Psoas muscle (tissue), 8 donors: ENCODE measurements at regions of chr7 and their contacts with region 1.

Region 1: DNA sequence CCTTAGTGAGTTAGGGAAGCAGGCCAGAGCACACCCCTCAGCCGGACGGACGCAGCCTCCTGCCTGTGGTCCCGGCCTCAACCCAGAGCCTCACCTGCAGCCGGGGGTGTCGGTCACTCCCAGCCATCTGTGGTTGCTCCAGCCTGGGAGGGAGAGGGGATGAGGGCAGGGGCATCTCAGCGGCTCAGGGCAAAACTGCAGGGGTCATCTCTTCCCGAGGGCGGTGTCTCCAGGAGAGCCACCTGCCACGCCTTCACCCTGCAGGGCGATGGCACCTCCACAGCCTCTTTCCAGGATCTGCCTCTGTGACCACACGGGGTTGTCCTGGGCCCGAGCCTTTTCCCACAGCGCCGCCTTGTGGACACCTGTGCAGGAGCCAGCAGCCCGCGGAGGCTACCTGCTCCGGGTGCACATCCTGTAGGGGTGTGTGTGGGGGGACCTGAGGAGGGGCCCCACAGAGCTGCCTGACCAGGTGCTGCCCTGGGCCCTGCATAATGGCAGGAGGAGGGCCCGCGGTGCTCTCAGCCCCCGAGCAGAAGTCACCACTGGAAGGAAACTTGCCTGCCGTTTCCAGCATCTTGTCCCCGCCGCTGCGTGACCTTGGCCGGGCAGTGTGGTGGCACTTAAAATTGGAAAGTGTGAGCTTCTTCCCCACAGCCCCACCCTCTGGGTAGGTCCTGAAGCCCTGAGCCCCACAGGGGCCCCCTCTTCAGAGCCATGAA is 21.6 kb upstream of the AP5Z1 start:
- DNase-seq: peak; percentile 74 to 91
- ATAC-seq: peak; percentile 84 to 94 (median 90)
- H3K4me3 ChIP-seq: no peak overlapping the region
- H3K27ac ChIP-seq: no peak overlapping the region
- H3K4me1 ChIP-seq: no peaks in the 10 kb centered on the region
- H3K27me3 ChIP-seq: no peaks in the 10 kb centered on the region
- CTCF ChIP-seq: peak; percentile 89

Region 2: GRCh38 chr7:4610768-4611467 is 143.0 kb before region 1 on chr7:
- intact Hi-C with region 1: loop called in 1 of 2 experiments (anchors 10 kb)
- DNase-seq: no peak
- ATAC-seq: peak; percentile 29 to 67 (median 52)
- H3K4me3 ChIP-seq: no peak overlapping the region
- H3K27ac ChIP-seq: no peak overlapping the region
- H3K4me1 ChIP-seq: peaks cover 15% of the 10 kb centered on the region
- H3K27me3 ChIP-seq: no peaks in the 10 kb centered on the region
- CTCF ChIP-seq: peak; percentile 86

Region 3: GRCh38 chr7:4641667-4642467 is 112.0 kb before region 1 on chr7:
- intact Hi-C with region 1: loop called (anchors 5 kb)
- DNase-seq: peak; percentile 95 to 98
- ATAC-seq: peak; percentile 95 to 96 (median 96)
- H3K4me3 ChIP-seq: peak overlapping the region; percentile 81
- H3K27ac ChIP-seq: peak overlapping the region; percentile 94
- H3K4me1 ChIP-seq: peaks cover 5% of the 10 kb centered on the region
- H3K27me3 ChIP-seq: no peaks in the 10 kb centered on the region
- CTCF ChIP-seq: peak; percentile 44

Region 4: GRCh38 chr7:4689668-4690067 is 64.2 kb before region 1 on chr7:
- intact Hi-C with region 1: loop called in 1 of 2 experiments (anchors 2 kb)
- DNase-seq: no peak
- ATAC-seq: peak in 2 of 4 donors; percentile 15 to 26
- H3K4me3 ChIP-seq: no peak overlapping the region
- H3K27ac ChIP-seq: peak overlapping the region; percentile 5
- H3K4me1 ChIP-seq: peaks cover 83% of the 10 kb centered on the region
- H3K27me3 ChIP-seq: no peaks in the 10 kb centered on the region
- CTCF ChIP-seq: no peak

Region 5: DNA sequence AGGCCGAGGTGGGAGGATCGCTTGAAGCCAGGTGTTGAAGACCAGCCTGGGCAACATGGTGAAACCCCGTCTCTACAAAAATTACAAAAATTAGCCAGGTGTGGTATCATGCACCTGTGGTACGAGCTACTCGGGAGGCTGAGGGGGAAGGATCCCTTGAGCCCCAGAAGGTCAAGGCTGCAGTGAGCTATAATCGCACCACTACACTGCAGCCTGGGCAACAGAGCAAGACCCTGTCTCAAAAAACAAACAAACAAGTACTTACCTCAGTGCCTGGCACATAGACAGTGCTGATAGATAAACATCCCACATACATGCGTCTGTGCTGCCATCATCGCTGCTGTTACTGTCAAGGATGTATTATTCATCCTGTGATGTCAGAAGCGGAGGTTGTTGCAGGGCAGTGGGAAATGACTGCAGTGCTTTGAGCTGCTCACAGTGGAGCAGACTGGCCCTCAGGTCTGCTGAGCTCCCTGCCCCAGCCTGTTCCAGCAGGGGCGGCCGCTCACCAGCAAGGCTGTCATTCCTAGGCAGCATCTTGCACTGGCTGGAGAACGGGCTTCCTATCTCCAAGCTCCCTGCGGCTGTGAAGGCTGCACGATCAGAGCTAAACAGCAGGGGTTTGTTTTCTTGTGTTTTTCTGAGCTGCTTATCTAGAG is 53.2 kb before region 1 on chr7:
- intact Hi-C with region 1: no loop called
- DNase-seq: no peak
- ATAC-seq: peak in 3 of 4 donors; percentile 12 to 46 (median 32)
- H3K4me3 ChIP-seq: no peak overlapping the region
- H3K27ac ChIP-seq: no peak overlapping the region
- H3K4me1 ChIP-seq: peaks cover 28% of the 10 kb centered on the region
- H3K27me3 ChIP-seq: no peaks in the 10 kb centered on the region
- CTCF ChIP-seq: no peak

Region 6: DNA sequence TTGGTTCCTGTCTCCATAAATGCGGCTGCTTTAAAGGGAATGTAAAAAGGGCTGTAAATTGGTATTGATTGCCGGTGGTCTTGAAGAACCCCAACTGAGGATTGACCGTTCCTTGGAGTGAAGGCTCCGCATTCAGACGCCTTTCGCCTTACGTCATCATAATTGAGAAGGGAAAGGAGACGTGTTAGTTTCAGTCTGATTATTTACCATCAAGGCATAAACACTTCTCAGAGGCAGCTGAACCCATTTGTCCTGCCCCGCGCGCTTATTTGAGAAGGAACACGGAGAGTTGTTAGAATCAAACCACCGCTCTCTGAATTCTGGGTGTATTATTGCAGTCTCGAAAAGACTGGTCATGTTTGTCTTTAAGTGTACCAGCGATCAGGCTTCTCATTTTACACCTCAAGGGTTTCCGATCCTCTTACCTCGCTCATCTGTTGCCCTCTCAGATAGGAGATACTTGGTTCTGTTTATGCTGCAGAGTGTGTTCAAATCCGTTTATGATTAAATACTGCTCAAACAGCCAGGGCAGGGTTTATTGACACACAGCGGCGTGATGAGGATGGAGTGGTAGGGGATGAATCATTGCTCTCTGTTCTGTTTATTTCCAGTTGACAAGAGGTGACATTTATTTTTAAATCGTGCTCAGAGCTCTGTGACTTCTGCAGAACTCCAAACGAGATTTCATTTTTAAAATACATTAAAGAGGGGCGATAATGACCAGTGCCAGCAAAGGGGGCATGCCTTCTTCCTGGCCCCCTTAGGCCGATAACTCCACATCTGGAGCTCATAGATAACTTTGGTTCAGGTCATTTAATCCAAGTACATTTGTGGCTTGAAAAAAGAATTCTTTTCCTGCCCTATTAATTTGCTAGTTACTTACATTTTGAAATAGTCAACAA is 41.3 kb before region 1 on chr7:
- intact Hi-C with region 1: no loop called
- DNase-seq: no peak
- ATAC-seq: peak; percentile 52 to 76 (median 70)
- H3K4me3 ChIP-seq: peak overlapping the region; percentile 26
- H3K27ac ChIP-seq: peak overlapping the region; percentile 86
- H3K4me1 ChIP-seq: peaks cover 33% of the 10 kb centered on the region
- H3K27me3 ChIP-seq: no peaks in the 10 kb centered on the region
- CTCF ChIP-seq: no peak

Region 7: DNA sequence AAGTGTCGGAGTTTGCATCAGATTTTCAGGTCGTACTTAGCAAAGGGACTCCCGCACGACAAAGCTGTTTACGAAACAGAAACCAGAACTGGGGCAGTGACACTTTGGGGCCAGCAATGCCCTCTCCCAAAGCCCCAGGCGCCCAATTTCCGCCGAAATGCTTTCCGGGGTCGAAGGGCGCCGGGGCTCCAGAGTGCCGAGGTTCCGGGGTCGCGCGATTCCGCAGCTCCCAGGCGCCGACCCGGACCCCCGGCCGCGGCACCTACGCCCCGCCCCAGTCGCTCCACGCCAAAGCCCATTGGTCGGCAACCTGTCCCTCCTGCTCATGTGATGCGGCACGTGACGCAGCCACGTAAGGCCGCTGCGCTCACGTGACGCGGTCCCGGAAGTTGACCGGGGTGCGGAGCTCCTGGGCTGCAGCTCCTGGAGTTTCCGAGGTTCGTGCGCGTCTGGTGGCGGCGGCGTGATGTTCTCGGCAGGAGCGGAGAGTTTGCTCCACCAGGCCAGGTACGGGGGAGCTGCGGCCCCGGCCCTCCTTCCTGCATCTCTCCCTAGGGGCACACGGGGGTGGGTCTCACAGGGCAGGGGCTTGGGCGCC is 21.5 kb after region 1 on chr7 and contains the start of gene AP5Z1:
- intact Hi-C with region 1: loop called in 1 of 2 experiments (anchors 2 kb)
- DNase-seq: peak; percentile 97 to 98
- ATAC-seq: peak; percentile 98 to 99 (median 98)
- H3K4me3 ChIP-seq: peak within 1 kb of the TSS; percentile 97
- H3K27ac ChIP-seq: peak within 1 kb of the TSS; percentile 96
- H3K4me1 ChIP-seq: peaks cover 11% of the 10 kb centered on the region
- H3K27me3 ChIP-seq: no peaks in the 10 kb centered on the region
- CTCF ChIP-seq: no peak
- total RNA-seq, gene AP5Z1: 6.6 to 20.1 (median 8.7) TPM